Calu3 (cell line): ENCODE measurements at regions of chr5 and their contacts with region 1.

Region 1: DNA sequence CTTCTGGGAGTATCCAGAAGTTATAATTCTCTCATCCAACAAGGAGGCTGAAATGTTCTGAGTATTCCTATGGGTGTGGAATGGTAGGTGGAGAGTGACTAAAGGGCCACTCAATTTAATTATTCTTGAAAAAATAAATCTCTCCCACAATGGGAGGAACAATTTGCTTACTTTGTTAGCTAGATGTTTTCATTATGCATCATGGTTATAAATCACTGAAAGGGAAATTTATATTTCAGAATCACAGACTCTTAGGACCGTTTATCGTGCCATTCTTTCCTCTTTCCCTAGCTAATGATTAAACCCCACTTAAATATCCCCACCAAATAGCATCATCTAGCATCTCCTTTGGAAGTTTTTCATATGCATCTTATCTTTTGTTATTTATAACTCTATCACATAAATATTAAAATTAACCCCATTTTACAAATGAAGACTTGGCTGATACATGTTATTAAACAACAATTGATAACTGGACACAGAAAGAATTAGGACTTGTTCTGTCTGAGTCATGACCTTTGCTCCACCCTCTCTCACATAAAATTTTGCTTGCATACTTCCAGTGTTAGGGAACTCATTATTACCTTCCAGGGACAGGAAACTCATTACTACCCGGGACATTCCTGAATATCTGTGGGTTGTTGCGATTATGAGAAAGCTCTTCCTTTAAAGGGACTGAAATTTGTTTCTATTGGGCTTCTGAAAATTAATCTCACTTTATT is 94.9 kb upstream of the NMUR2 start:
- DNase-seq: peak; percentile 62
- H3K4me3 Mint-ChIP-seq: peak overlapping the region; percentile 49
- H3K27ac Mint-ChIP-seq: peak overlapping the region; percentile 97
- H3K4me1 Mint-ChIP-seq: peaks cover 69% of the 10 kb centered on the region
- H3K27me3 Mint-ChIP-seq: no peaks in the 10 kb centered on the region
- CTCF ChIP-seq: no peak

Region 2: GRCh38 chr5:151030400-151030799 is 1469.6 kb before region 1 on chr5:
- CTCF ChIA-PET with region 1: no interaction called
- intact Hi-C with region 1: no loop called
- DNase-seq: no peak
- H3K4me3 Mint-ChIP-seq: no peak overlapping the region
- H3K27ac Mint-ChIP-seq: no peak overlapping the region
- H3K4me1 Mint-ChIP-seq: no peaks in the 10 kb centered on the region
- H3K27me3 Mint-ChIP-seq: no peaks in the 10 kb centered on the region
- CTCF ChIP-seq: no peak

Region 3: GRCh38 chr5:152379331-152379730 is 120.6 kb before region 1 on chr5:
- CTCF ChIA-PET with region 1: interaction called, 6 read pairs
- intact Hi-C with region 1: loop called (anchors 1 kb)
- DNase-seq: no peak
- H3K4me3 Mint-ChIP-seq: no peak overlapping the region
- H3K27ac Mint-ChIP-seq: peak overlapping the region; percentile 28
- H3K4me1 Mint-ChIP-seq: peaks cover 60% of the 10 kb centered on the region
- H3K27me3 Mint-ChIP-seq: no peaks in the 10 kb centered on the region
- CTCF ChIP-seq: no peak

Region 4: DNA sequence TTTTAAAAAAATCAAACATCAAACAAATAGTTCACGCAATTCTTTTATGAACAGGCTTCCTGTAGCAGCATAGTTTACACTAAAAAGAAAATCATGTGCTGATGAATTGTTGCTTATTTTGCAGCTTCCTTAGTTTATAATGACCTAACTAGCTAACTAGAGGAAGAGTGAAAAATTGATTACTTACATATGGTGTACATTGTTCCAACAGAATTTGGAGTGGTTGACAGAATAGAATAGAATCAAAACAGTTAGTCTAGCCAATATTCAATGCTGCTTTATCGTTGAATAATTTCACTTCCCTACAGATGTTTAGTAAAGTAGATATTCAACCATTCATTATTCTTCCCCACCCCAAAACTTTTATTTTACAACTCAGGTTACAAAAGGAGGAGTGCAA is 99.1 kb before region 1 on chr5:
- CTCF ChIA-PET with region 1: interaction called, 6 read pairs
- intact Hi-C with region 1: loop called (anchors 1 kb)
- DNase-seq: no peak
- H3K4me3 Mint-ChIP-seq: peak overlapping the region; percentile 96
- H3K27ac Mint-ChIP-seq: peak overlapping the region; percentile 38
- H3K4me1 Mint-ChIP-seq: peaks cover 38% of the 10 kb centered on the region
- H3K27me3 Mint-ChIP-seq: no peaks in the 10 kb centered on the region
- CTCF ChIP-seq: no peak

Region 5: DNA sequence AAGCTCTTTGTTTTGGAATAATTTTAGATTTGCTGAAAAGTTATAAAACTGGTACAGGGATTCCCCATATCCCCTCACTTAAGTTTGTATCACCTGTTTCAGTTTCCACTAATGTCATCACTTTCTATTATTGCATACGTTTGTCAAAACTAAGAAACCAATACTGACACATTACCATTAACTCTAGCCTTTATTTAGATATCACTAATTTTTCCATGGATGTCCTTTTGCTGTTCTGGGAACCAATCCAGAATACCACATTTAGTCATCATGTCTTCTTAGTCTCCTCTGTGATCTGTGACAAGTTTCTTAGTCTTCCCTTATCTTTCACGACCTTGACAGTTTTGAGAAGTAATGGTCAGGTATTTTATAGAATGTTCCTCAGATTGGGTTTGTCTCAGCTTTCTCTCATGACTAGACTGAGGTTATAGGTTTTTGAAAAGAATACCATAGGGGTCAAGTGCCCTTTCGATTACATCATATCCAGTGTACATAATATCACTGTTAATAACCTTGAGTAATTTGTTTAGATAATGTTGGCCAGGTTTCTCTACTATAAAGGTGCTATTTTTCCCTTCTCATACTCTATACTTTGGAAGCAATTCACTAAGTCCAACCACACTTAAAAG is 43.0 kb before region 1 on chr5:
- CTCF ChIA-PET with region 1: interaction called, 4 read pairs
- intact Hi-C with region 1: loop called (anchors 1 kb)
- DNase-seq: no peak
- H3K4me3 Mint-ChIP-seq: no peak overlapping the region
- H3K27ac Mint-ChIP-seq: peak overlapping the region; percentile 55
- H3K4me1 Mint-ChIP-seq: peaks cover 55% of the 10 kb centered on the region
- H3K27me3 Mint-ChIP-seq: no peaks in the 10 kb centered on the region
- CTCF ChIP-seq: no peak

Region 6: GRCh38 chr5:152532714-152533113 is 32.7 kb after region 1 on chr5:
- CTCF ChIA-PET with region 1: no interaction called
- intact Hi-C with region 1: no loop called
- DNase-seq: peak; percentile 34
- H3K4me3 Mint-ChIP-seq: no peak overlapping the region
- H3K27ac Mint-ChIP-seq: no peak overlapping the region
- H3K4me1 Mint-ChIP-seq: no peaks in the 10 kb centered on the region
- H3K27me3 Mint-ChIP-seq: peaks cover 41% of the 10 kb centered on the region
- CTCF ChIP-seq: peak; percentile 61